Uterus (tissue), 4 donors: ENCODE measurements at regions of chr10 and their contacts with region 1.

Region 1: GRCh38 chr10:17607603-17608332 is 9.4 kb downstream of the HACD1 start:
- DNase-seq: no peak
- H3K4me3 ChIP-seq: no peak overlapping the region
- H3K27ac ChIP-seq: no peak overlapping the region
- H3K4me1 ChIP-seq: no peaks in the 10 kb centered on the region
- H3K27me3 ChIP-seq: no peaks in the 10 kb centered on the region
- CTCF ChIP-seq: peak; percentile 85 to 88 (median 87)
- POLR2A ChIP-seq: no peak

Region 2: GRCh38 chr10:17527516-17528146 is 80.1 kb before region 1 on chr10:
- intact Hi-C with region 1: no loop called
- DNase-seq: no peak
- H3K4me3 ChIP-seq: no peak overlapping the region
- H3K27ac ChIP-seq: no peak overlapping the region
- H3K4me1 ChIP-seq: no peaks in the 10 kb centered on the region
- H3K27me3 ChIP-seq: no peaks in the 10 kb centered on the region
- CTCF ChIP-seq: no peak
- POLR2A ChIP-seq: no peak

Region 3: DNA sequence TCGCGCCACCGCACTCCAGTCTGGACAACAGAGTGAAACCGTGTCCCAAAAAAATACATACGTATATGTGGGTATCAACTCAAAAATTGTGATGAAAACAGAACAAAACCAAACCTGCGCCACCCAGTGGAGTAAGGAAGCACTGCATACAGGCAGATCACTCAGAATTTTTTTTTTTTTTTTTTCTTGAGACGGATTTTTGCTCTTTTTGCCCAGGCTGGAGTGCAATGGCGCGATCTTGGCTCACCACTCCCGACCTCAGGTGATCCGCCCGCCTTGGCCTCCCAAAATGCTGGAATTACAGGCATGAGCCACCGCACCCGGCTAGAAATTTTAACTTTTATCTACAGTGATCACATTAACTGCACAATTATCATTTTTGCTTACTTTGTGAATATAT is 135.2 kb after region 1 on chr10:
- intact Hi-C with region 1: loop called (anchors 10 kb)
- DNase-seq: peak; percentile 55 to 59
- H3K4me3 ChIP-seq: no peak overlapping the region
- H3K27ac ChIP-seq: no peak overlapping the region
- H3K4me1 ChIP-seq: no peaks in the 10 kb centered on the region
- H3K27me3 ChIP-seq: no peaks in the 10 kb centered on the region
- CTCF ChIP-seq: peak; percentile 64 to 83 (median 72)
- POLR2A ChIP-seq: no peak